ENCODE measurements at regions of chr21 and their contacts with region 1.

Region 1: GRCh38 chr21:34745557-34746255 is 76.9 kb downstream of the CLIC6 start:
- DNase-seq: peak; percentile 33
- ATAC-seq: peak; percentile 95
- H3K4me3 Mint-ChIP-seq: peak overlapping the region; percentile 72
- H3K27ac Mint-ChIP-seq: no peak overlapping the region
- H3K4me1 Mint-ChIP-seq: peaks cover 5% of the 10 kb centered on the region
- H3K27me3 Mint-ChIP-seq: peaks cover 16% of the 10 kb centered on the region
- CTCF ChIP-seq: peak; percentile 36

Region 2: DNA sequence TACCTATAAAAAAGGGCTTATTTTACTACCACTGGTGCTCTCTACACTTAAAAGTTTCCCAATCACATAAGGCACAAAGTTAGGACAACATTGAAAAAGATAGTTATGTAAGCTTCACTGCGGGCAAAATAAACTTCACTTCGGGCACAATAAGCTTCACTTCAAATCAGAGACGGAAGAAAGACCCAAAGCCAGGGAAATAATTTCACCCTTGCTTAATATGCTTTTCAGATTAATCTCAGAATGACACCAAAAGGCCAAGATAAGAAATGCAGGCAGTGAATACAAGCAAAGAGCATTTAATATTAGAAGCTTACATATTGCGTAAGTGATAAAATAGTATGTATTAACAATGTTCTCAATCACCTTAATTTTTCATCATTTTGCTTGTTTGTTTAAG is 870.4 kb after region 1 on chr21:
- CTCF ChIA-PET with region 1: interaction called, 4 read pairs
- POLR2A ChIA-PET with region 1: no interaction called
- intact Hi-C with region 1: loop called (anchors 1 kb)
- DNase-seq: no peak
- ATAC-seq: no peak
- H3K4me3 Mint-ChIP-seq: no peak overlapping the region
- H3K27ac Mint-ChIP-seq: no peak overlapping the region
- H3K4me1 Mint-ChIP-seq: peaks cover 3% of the 10 kb centered on the region
- H3K27me3 Mint-ChIP-seq: no peaks in the 10 kb centered on the region
- CTCF ChIP-seq: no peak

Region 3: GRCh38 chr21:35940074-35940927 is 1194.6 kb after region 1 on chr21:
- CTCF ChIA-PET with region 1: interaction called, 9 read pairs
- POLR2A ChIA-PET with region 1: no interaction called
- intact Hi-C with region 1: loop called (anchors 1 kb)
- DNase-seq: no peak
- ATAC-seq: peak; percentile 71
- H3K4me3 Mint-ChIP-seq: no peak overlapping the region
- H3K27ac Mint-ChIP-seq: no peak overlapping the region
- H3K4me1 Mint-ChIP-seq: peaks cover 2% of the 10 kb centered on the region
- H3K27me3 Mint-ChIP-seq: peaks cover 3% of the 10 kb centered on the region
- CTCF ChIP-seq: no peak

Region 4: DNA sequence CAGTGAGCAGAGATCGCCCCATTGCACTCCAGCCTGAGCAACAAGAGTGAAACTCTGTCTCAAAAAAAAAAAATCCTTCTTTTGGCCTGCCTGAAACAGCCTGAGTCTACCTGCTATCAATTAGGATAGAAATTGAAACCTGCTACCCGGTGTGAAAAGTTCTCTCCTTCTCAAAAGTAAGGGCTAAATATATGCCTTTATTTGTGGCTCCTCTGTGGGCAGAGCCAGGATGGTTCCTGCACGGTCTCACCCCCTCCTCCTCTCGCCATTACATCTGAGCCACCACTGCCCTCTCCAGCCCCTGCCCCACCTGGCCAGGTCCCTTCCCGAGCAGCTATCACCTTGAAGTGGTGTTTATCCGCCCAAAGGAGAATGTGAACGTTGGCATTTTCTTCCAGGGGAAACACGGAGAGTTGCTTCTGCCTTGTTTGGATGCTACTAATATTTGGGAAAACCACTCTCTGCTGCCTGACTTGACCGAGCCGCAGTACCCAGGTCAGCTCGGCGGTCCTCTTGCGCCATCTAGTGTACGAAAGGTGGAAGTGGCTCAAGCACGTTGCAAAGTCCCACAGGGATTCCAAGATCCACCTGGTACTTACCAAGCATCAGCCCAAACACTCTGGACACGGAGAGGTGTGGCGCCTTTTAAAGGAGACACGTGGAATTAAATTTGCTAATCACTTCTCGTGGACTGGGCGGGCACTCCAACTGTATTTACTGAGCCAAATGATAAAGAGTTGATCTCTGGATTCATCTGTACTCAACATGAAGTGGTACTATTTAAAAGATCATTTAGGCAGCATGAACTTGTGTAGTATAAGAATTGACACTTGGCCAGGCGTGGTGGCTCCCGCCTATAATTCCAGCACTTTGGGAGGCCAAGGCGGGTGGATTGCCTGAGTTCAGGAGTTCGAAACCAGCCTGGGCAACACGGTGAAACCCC is 1282.7 kb after region 1 on chr21:
- CTCF ChIA-PET with region 1: interaction called, 12 read pairs
- POLR2A ChIA-PET with region 1: no interaction called
- intact Hi-C with region 1: loop called (anchors 1 kb)
- DNase-seq: peak; percentile 49
- ATAC-seq: peak; percentile 90
- H3K4me3 Mint-ChIP-seq: no peak overlapping the region
- H3K27ac Mint-ChIP-seq: no peak overlapping the region
- H3K4me1 Mint-ChIP-seq: peaks cover 5% of the 10 kb centered on the region
- H3K27me3 Mint-ChIP-seq: no peaks in the 10 kb centered on the region
- CTCF ChIP-seq: peak; percentile 85

Measured in activated B cell treated with CpG ODN at 0.5 μM for 24 hours (primary cell).